Right ventricle myocardium inferior (tissue), 1 donor: ENCODE measurements at regions of chr5 and their contacts with region 1.

Region 1: DNA sequence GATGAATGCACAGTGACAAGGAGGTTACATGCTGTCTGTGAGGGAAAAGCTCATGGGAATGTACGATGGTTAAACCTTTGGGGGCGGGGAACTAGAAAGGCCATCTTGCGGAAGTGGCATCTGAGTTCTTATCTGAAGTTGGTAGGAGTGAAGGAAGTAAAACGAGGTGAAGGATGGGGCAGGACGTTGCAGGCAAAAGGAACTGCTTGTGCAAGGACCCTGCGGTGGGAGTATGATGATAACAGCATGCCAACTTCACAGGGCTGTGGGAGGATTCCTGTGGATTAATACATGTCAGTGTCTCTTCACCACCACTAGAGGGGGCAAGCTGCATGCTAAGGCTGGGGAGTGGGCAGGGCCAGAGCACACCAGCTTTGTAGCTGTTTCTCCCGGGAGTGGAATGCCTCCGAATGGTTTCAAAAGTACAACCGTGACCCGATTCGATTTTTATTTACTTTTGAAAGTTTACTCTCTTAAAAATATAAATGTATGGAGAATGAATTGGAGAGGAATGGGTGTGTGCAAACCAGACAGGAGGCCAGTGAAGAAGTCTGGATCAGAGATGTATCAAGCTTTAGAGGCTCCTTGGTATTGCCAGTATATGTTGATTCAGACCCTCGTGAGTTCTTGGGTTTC is 62.5 kb downstream of the CYFIP2 start:
- DNase-seq: peak; percentile 85
- ATAC-seq: peak; percentile 95

Region 2: DNA sequence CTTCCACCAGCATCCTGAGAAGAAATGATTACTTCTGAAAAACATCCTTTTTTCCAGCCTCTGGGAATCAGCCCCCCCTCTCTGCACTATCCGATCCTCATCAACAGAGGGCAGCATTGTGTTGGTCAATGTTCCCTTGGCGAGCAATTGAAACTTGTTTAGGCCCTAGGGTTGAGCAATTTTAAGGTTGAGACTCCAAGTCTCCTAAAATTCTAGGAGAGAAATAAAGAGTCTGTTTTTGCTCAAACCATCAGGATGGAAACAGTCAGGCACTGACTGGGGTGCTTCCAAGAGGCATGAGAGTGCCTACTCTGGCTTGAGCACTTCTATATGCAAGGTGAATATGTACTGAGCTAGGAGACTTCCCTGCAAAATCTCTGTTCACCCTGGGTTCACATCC is 74.8 kb before region 1 on chr5:
- intact Hi-C with region 1: no loop called
- DNase-seq: no peak
- ATAC-seq: peak; percentile 84

Region 3: GRCh38 chr5:157476702-157477408 is 148.5 kb after region 1 on chr5:
- intact Hi-C with region 1: loop called (anchors 1 kb)
- DNase-seq: no peak
- ATAC-seq: peak; percentile 69

Region 4: GRCh38 chr5:157718519-157718918 is 390.1 kb after region 1 on chr5:
- intact Hi-C with region 1: loop called (anchors 5 kb)
- DNase-seq: no peak
- ATAC-seq: peak; percentile 89

Region 5: GRCh38 chr5:157743163-157744050 is 415.0 kb after region 1 on chr5 and contains the start of gene LSM11:
- intact Hi-C with region 1: loop called (anchors 1 kb)
- DNase-seq: peak; percentile 96
- ATAC-seq: peak; percentile 98
- total RNA-seq, gene LSM11: 1.5 TPM